Common myeloid progenitor, CD34-positive (primary cell): ENCODE measurements at regions of chr1 and their contacts with region 1.

Region 1: DNA sequence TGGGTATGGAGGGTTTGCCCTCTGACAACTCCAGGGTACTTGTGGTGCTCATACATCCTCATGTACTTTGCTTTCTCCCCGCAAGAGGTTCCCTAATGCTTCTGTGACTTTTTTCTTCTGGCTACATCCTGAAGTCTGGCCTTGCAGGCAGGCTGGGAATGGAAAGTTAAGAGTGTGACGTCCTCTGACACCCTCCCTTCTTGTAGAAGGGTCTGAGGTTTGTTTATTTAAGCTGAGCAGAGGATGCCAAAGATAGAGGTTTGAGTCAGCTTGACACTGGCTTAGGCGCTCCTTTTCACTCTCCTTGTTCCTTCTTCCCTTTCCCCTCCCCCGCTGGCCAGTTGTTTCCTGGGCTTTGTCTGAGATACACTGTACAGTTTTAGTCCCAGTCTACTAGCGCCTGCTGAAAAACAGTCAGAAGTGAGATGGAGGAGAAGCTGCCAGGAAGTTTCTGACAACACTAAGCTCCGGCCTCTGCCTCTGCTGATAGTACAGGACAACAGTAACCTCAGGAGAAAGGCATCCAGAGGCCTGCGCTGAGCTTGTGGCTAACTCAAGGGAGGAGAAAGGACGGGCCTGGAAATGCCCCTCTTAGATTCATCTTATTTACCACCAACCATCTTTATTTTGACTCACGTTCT is at the start of gene MACF1:
- DNase-seq: peak; percentile 79 to 91 (median 86)
- H3K4me3 ChIP-seq: peak within 1 kb of the TSS; percentile 42 to 99 (median 85)
- H3K27ac ChIP-seq: peak within 1 kb of the TSS; percentile 82 to 91
- H3K4me1 ChIP-seq: peaks cover 7 to 60% (median 31%) of the 10 kb centered on the region in 4 experiments
- H3K27me3 ChIP-seq: no peaks in the 10 kb centered on the region

Region 2: DNA sequence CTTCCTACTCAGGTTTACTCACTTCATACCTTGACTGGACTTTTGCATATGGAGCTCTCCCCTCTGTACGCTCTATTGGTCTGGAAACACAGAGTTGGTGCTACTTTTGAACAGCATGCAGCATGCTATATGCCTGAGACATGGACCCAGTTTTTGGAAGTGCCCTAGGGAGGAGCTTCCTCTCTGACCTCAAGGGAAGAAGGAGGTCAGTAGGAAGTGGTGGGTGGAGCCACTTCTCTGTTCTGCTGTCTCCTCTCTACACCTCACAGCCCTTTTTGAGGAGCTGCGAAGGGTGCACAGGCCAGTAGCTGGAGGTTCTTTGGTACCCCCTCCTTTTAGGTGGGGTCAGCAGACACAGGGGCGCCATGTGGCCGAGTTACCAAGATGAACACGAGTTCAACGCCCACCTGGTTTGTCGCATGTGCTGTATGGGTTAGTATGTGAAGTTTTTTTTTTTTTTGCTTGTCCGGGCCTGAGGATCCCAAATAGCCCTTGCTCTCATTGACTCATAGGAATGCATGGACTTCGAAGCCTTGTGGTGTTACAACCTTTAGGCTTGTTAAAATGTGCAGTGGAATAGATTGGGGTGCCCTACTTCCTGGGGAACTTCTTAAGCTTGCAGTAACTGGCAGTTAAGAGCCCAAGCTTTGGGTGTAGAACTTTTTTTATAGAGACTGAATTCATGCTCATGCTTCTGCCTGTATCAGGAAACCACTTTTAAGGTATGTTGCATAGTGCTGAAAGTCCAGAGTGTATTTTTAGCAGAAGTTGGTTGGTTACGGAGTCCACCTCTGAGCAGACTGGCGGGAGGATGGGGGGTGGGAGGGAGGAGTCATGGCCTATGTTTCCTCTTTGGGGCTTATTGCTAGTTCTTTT is 10.7 kb after region 1 on chr1:
- CTCF ChIA-PET with region 1: interaction called, 123 read pairs
- POLR2A ChIA-PET with region 1: interaction called, 13 read pairs
- DNase-seq: peak; percentile 56 to 92 (median 88)
- H3K4me3 ChIP-seq: peak overlapping the region in 6 of 7 experiments; percentile 52 to 76 (median 70)
- H3K27ac ChIP-seq: peak overlapping the region; percentile 79 to 93
- H3K4me1 ChIP-seq: peaks cover 35 to 77% (median 59%) of the 10 kb centered on the region in 4 experiments
- H3K27me3 ChIP-seq: no peaks in the 10 kb centered on the region

Region 3: DNA sequence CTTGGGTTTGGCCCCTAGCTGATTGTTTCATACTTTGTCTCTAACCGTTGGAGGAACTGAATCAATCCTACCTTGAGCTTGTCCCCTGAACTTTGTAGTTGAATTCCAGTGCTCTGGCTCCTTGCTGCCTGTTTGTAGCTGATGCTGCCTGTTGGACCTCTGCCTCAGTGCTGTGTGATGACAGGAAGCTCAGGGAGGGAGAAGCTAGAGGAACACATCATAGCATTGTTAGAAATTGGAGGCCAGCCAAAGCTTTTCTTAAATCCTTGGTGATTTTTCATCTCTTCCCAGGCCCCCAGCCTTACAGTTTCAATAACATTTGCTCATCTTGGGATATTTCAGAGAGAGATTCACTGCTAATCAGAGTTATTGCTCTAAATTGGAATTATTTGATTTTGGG is 33.9 kb after region 1 on chr1:
- CTCF ChIA-PET with region 1: interaction called, 13 read pairs
- POLR2A ChIA-PET with region 1: interaction called, 5 read pairs
- DNase-seq: no peak
- H3K4me3 ChIP-seq: no peak overlapping the region
- H3K27ac ChIP-seq: peak overlapping the region; percentile 17 to 37
- H3K4me1 ChIP-seq: peaks cover 0 to 8% (median 6%) of the 10 kb centered on the region in 4 experiments
- H3K27me3 ChIP-seq: no peaks in the 10 kb centered on the region

Region 4: DNA sequence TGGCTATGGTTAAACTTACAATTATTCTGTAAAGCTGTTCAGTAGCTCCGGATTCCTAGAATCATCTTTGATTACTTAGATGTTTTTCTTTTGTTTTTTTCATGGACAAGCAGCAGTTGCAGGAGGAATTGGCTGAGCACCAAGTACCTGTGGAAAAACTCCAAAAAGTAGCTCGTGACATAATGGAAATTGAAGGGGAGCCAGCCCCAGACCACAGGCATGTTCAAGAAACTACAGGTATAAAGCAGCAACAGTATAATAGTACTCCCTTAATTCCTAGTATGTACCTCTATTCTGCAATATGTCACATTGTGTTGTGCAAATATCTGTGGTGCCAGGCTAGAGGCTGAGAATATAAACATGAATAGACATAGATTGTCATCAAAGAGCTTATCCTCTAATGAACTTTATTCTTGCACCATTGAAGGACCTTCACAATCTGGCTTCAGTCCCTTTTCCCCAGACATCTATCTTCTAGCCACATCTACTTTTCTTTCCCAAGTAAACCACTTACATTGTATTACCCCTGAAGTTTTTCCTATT is 154.5 kb after region 1 on chr1:
- CTCF ChIA-PET with region 1: no interaction called
- POLR2A ChIA-PET with region 1: no interaction called
- DNase-seq: no peak
- H3K4me3 ChIP-seq: no peak overlapping the region
- H3K27ac ChIP-seq: no peak overlapping the region
- H3K4me1 ChIP-seq: no peaks in the 10 kb centered on the region
- H3K27me3 ChIP-seq: no peaks in the 10 kb centered on the region